Right ventricle myocardium inferior (tissue), 1 donor: ENCODE measurements at regions of chr9 and their contacts with region 1.

Region 1: DNA sequence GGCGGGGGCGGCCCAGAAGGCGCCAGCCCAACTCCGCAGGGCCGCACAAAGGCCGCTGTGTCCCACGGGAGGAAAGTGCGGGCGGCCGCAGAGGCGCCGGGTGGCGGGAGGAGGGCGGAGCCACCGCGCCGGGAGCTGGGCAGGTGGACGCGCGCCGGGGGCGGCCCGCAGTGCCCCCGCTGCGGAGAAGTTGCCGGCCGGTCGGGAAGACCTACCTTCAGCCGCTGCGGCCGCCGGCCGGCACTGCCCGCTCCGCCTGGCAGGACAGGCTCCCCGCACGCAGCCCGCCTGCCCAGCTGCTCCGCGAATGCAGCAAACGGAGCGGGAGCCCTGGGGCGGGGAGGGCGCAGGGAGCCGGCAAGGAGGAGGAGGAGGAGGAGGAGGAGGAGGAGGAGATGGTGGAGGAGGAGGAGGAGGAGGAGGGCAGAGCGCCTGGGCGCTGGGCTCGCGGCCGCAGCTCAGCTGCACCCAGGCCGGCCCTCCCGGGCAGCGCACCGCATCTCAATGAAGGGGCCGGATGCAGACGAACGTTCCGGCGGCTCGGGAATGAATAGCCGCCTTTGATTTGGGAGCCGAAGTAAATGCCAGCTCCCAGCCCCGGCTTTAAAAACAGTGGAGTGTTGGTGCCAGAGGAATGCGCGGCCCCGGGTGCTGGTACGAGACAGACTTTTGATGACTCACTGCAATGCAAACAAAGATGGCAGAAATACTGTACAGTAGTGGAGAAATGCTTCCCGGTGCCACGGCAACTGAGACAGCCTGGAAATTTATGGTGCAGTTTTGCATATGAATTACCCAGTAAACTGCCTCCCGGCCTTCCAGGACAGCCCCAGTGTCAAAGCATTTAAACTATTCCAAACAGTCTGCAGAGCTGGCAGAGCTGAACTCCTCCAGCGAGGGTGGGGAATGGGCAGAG is 43.3 kb downstream of the NACC2 start:
- DNase-seq: peak; percentile 88
- ATAC-seq: peak; percentile 58

Region 2: DNA sequence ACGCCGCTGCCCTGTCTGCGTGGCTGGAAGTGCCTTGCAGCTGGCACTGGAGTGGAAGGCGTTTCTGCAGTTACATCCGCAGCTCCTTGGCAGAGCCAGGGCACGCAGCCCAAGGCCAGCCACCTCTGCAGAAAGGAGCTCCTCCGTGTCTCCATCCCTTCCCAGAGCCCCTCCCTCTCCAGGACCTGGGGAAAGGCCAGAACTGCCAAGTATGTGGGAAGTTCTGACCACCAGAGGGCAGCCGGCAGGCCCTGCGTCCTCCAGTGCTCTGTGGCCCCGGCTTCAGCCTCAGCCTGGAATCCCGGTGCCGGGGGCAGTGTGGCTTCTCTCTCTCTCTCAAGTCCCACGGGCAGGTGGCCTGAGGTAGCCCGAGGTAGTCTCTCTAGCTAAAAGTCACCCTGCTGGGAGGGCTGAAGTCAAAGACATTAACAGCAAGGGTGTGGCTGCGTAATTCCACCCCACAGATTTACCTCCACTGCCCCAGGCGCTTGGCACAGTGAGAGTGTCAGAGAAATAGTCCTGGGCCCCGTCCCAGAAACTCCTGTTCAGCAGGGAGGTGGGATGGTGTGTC is 1272.8 kb before region 1 on chr9:
- intact Hi-C with region 1: no loop called
- DNase-seq: no peak
- ATAC-seq: peak; percentile 39

Region 3: GRCh38 chr9:136093995-136094881 is 42.5 kb after region 1 on chr9:
- intact Hi-C with region 1: loop called (anchors 5 kb)
- DNase-seq: peak; percentile 91
- ATAC-seq: peak; percentile 70